ENCODE measurements at regions of chr11 and their contacts with region 1.

Region 1: DNA sequence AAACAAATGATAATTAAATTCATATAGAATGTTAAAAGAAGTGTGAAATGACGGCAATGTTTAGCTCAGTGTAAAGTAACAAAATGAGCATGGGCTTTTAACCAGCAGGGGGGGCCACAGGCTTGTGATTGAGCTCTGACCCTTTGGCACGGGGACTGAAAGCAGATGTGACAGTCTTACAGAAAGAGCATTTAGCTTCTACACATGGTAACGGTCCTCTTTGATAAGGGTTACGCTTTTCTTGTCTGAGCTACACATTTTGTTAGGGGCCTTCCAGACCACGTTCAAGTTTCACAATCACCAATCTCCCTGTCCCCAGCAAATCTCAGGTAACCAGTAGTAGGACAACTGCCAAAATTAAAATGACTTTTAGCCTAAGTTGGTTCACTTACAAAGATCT is 262.5 kb downstream of the DCDC1 start:
- DNase-seq: peak; percentile 77
- ATAC-seq: peak; percentile 92
- H3K4me3 Mint-ChIP-seq: no peak overlapping the region
- H3K27ac Mint-ChIP-seq: no peak overlapping the region
- H3K4me1 Mint-ChIP-seq: peaks cover 15% of the 10 kb centered on the region
- H3K27me3 Mint-ChIP-seq: no peaks in the 10 kb centered on the region
- CTCF ChIP-seq: peak; percentile 76

Region 2: GRCh38 chr11:31218847-31219246 is 111.8 kb after region 1 on chr11:
- CTCF ChIA-PET with region 1: interaction called, 16 read pairs
- POLR2A ChIA-PET with region 1: interaction called, 3 read pairs
- DNase-seq: no peak
- ATAC-seq: no peak; the same call in 1 of the 2 replicates
- H3K4me3 Mint-ChIP-seq: no peak overlapping the region
- H3K27ac Mint-ChIP-seq: no peak overlapping the region
- H3K4me1 Mint-ChIP-seq: peaks cover 5% of the 10 kb centered on the region
- H3K27me3 Mint-ChIP-seq: no peaks in the 10 kb centered on the region
- CTCF ChIP-seq: no peak

Region 3: GRCh38 chr11:31240338-31240904 is 133.4 kb after region 1 on chr11:
- CTCF ChIA-PET with region 1: interaction called, 46 read pairs
- POLR2A ChIA-PET with region 1: no interaction called
- DNase-seq: peak; percentile 39
- ATAC-seq: peak; percentile 87
- H3K4me3 Mint-ChIP-seq: no peak overlapping the region
- H3K27ac Mint-ChIP-seq: 0 out of 2 replicates have a peak overlapping the region, but pooled peaks have one; percentile 38
- H3K4me1 Mint-ChIP-seq: peaks cover 54% of the 10 kb centered on the region
- H3K27me3 Mint-ChIP-seq: no peaks in the 10 kb centered on the region
- CTCF ChIP-seq: 0 out of 2 replicates have a peak, but pooled peaks have one; percentile 37

Region 4: DNA sequence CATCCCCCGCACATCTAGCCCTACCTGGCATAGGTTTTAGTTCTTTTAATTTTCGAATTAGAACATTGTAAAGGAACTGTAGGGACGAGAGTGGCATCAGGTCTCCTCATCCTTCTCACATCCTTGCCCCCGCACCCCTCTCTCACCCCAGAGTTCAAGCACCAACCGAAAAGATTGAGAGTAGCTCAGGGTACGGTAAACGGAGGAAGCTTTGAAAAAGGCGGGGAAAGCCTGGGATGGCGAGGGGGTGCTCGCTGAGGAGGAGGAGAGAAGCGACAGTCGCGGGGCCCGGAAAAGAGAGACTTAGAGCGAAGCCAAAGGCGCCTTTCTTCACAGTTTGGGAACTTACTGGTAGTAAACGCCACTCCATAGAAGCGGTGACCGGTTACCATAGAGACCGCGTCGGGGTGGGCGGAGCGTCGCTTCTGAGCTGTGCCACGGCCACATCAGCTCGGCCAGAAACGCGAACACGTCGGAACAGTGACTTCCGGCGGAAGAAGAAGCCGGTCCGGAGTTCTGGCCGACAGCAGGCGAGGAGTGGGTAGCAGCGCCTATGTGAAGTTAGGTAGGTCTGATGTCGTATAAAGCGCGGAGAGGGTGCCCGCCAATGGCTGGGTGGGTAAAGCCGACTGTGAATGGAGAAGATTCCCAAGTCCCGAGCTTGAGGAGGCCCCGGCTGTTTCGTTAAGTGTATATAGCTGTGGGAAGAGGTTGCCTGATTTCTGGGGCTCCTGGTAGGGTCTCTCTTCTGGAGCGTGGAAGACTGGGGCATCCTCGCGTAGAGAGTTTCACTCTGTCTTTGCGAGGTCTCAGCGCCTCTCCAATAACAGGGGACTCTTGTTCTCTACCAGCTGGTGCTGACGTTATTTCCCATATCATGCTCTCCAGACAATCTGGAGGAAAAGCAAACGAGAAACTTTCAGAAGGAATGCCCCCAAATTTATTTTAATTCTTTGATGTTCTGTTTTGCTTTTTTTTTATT is 262.6 kb after region 1 on chr11 and contains the starts of genes DCDC1 and DNAJC24:
- CTCF ChIA-PET with region 1: interaction called, 15 read pairs
- POLR2A ChIA-PET with region 1: no interaction called
- DNase-seq: peak; percentile 95
- ATAC-seq: peak; percentile 97
- H3K4me3 Mint-ChIP-seq: peak within 1 kb of the TSS; percentile 87
- H3K27ac Mint-ChIP-seq: peak within 1 kb of the TSS; percentile 95
- H3K4me1 Mint-ChIP-seq: peaks cover 10% of the 10 kb centered on the region
- H3K27me3 Mint-ChIP-seq: no peaks in the 10 kb centered on the region; the same call in 1 of the 2 replicates
- CTCF ChIP-seq: no peak
- total RNA-seq, gene DCDC1: 0.22 to 0.25 TPM (median 0.25 TPM) in 3 replicates
- total RNA-seq, gene DNAJC24: 14.6 to 17.8 TPM (median 15.4 TPM) in 3 replicates

Region 5: DNA sequence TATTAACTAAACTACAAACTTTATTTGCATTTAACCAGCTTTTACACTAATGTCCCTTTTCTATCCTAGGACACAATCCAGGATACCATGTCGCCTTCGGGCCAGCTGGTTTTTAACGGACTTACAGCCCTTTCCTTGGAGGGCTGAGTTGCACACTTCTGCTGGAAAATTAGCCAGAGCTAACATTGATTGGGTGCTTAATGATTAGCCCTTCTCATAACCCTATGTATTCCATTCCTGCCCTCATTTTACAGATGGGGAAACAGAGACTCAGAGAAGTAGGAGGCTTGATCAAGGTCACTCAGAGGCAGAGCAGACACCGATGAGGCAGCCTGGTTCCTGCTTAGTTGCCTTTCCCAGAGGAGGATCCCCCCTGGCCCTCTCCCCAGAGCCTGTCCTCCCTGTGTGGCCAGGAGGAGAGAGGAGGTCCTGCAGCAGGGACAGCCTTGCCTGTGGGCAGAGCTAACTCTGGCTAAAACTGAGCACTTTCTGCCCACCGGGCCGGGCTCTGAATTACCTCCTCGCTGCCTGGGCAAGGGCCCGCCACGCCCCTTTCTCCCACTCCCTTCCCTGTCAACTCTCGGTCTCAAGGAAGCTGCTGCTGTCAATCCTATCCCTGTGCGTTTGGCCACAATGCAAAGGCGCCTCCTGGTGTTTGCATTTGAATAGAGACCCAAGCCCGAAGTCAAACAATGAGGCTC is 763.7 kb after region 1 on chr11:
- CTCF ChIA-PET with region 1: interaction called, 10 read pairs
- POLR2A ChIA-PET with region 1: no interaction called
- DNase-seq: peak; percentile 87
- ATAC-seq: peak; percentile 90
- H3K4me3 Mint-ChIP-seq: peak overlapping the region; percentile 47
- H3K27ac Mint-ChIP-seq: no peak overlapping the region
- H3K4me1 Mint-ChIP-seq: peaks cover 30% of the 10 kb centered on the region
- H3K27me3 Mint-ChIP-seq: peaks cover 31% of the 10 kb centered on the region
- CTCF ChIP-seq: 0 out of 2 replicates have a peak, but pooled peaks have one; percentile 39

Measured in WTC11 (cell line).